Activated CD4-positive, alpha-beta memory T cell treated with anti-CD3 and anti-CD28 coated beads, Interleukin-2, amount 10 ng/mL, durations not matched to agents 7 days and 5 days (primary cell): ENCODE measurements at regions of chr5 and their contacts with region 1.

Region 1: GRCh38 chr5:172984243-172984953 is 827 bp downstream of the ATP6V0E1 start:
- DNase-seq: peak; percentile 81
- H3K4me3 Mint-ChIP-seq: peak overlapping the region; percentile 96
- H3K27ac Mint-ChIP-seq: peak overlapping the region; percentile 97
- H3K4me1 Mint-ChIP-seq: peaks cover 33% of the 10 kb centered on the region
- H3K27me3 Mint-ChIP-seq: no peaks in the 10 kb centered on the region

Region 2: DNA sequence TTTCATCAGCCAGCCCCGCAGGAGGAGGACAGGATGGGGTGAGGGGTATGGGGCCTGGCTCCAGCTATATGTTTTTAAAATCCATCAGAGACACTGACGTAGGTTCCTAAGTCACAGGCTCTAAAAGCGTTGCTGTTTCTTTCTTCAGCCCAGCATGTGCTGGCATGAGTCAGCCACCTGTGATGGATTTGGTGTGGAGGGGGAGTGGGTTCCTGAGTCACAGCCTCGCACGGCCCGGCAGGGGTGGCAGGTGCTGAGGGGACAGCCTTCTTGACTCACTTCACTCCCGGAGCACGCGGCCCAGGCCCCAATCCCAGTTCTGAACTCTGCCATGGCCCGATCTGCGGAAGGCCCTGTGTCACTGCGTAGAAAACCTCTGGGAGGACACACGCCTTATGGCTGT is 64.0 kb before region 1 on chr5:
- CTCF ChIA-PET with region 1: no interaction called
- POLR2A ChIA-PET with region 1: no interaction called
- DNase-seq: no peak
- H3K4me3 Mint-ChIP-seq: no peak overlapping the region
- H3K27ac Mint-ChIP-seq: no peak overlapping the region
- H3K4me1 Mint-ChIP-seq: no peaks in the 10 kb centered on the region
- H3K27me3 Mint-ChIP-seq: no peaks in the 10 kb centered on the region

Region 3: GRCh38 chr5:172973127-172973916 is 11.1 kb before region 1 on chr5:
- CTCF ChIA-PET with region 1: interaction called, 8 read pairs
- POLR2A ChIA-PET with region 1: interaction called, 10 read pairs
- DNase-seq: no peak
- H3K4me3 Mint-ChIP-seq: no peak overlapping the region
- H3K27ac Mint-ChIP-seq: no peak overlapping the region
- H3K4me1 Mint-ChIP-seq: no peaks in the 10 kb centered on the region
- H3K27me3 Mint-ChIP-seq: no peaks in the 10 kb centered on the region

Region 4: GRCh38 chr5:173001229-173001841 is 16.9 kb after region 1 on chr5:
- CTCF ChIA-PET with region 1: interaction called, 4 read pairs
- POLR2A ChIA-PET with region 1: interaction called, 20 read pairs
- DNase-seq: peak; percentile 37
- H3K4me3 Mint-ChIP-seq: peak overlapping the region; percentile 19
- H3K27ac Mint-ChIP-seq: no peak overlapping the region
- H3K4me1 Mint-ChIP-seq: peaks cover 44% of the 10 kb centered on the region
- H3K27me3 Mint-ChIP-seq: no peaks in the 10 kb centered on the region

Region 5: GRCh38 chr5:173035904-173036707 is 51.7 kb after region 1 on chr5:
- CTCF ChIA-PET with region 1: interaction called, 14 read pairs
- POLR2A ChIA-PET with region 1: interaction called, 48 read pairs
- DNase-seq: peak; percentile 20
- H3K4me3 Mint-ChIP-seq: peak overlapping the region; percentile 71
- H3K27ac Mint-ChIP-seq: peak overlapping the region; percentile 96
- H3K4me1 Mint-ChIP-seq: peaks cover 51% of the 10 kb centered on the region
- H3K27me3 Mint-ChIP-seq: no peaks in the 10 kb centered on the region

Region 6: GRCh38 chr5:173065155-173065554 is 80.8 kb after region 1 on chr5:
- CTCF ChIA-PET with region 1: interaction called, 40 read pairs
- POLR2A ChIA-PET with region 1: interaction called, 60 read pairs
- DNase-seq: no peak
- H3K4me3 Mint-ChIP-seq: peak overlapping the region; percentile 59
- H3K27ac Mint-ChIP-seq: peak overlapping the region; percentile 50
- H3K4me1 Mint-ChIP-seq: peaks cover 36% of the 10 kb centered on the region
- H3K27me3 Mint-ChIP-seq: no peaks in the 10 kb centered on the region

Region 7: DNA sequence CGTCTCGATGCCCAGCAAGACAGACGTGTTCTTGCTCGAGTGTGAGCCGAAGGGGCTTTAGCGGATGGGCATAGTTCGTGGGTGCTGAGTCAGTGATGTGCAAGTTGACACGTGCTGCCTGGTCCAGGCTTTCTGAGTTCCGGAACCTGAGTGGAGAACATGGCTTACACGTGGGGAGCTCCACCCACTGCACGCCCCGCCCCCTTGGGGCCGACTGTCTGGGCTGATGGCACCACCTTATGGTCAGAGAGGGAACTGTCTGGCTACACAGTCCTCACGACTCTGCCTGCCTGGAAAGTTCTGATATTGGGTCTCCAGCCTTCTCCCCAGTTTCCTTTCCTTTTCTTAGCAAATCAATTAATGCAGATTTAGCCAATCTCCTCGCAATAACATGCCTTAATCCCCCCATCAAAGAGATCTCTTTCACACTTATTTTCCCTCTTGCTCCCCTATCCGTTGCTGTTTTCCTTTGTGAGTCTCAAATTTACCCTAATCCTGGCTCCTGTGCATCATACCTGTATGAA is 347.6 kb after region 1 on chr5:
- CTCF ChIA-PET with region 1: interaction called, 11 read pairs
- POLR2A ChIA-PET with region 1: interaction called, 3 read pairs
- DNase-seq: peak; percentile 92
- H3K4me3 Mint-ChIP-seq: no peak overlapping the region
- H3K27ac Mint-ChIP-seq: peak overlapping the region; percentile 4
- H3K4me1 Mint-ChIP-seq: peaks cover 30% of the 10 kb centered on the region
- H3K27me3 Mint-ChIP-seq: peaks cover 32% of the 10 kb centered on the region